ENCODE measurements at regions of chr9 and their contacts with region 1.

Region 1: GRCh38 chr9:78035383-78035993 is 3.9 kb upstream of the GNAQ start:
- DNase-seq: peak; percentile 83
- H3K4me3 ChIP-seq: no peak overlapping the region
- H3K27ac ChIP-seq: peak overlapping the region; percentile 28 to 63 (median 52)
- H3K4me1 ChIP-seq: peaks cover 0 to 24% (median 14%) of the 10 kb centered on the region in 4 donors
- H3K27me3 ChIP-seq: no peaks in the 10 kb centered on the region
- CTCF ChIP-seq: peak; percentile 72 to 85 (median 77)
- EP300 ChIP-seq: no peak
- POLR2A ChIP-seq: no peak

Region 2: DNA sequence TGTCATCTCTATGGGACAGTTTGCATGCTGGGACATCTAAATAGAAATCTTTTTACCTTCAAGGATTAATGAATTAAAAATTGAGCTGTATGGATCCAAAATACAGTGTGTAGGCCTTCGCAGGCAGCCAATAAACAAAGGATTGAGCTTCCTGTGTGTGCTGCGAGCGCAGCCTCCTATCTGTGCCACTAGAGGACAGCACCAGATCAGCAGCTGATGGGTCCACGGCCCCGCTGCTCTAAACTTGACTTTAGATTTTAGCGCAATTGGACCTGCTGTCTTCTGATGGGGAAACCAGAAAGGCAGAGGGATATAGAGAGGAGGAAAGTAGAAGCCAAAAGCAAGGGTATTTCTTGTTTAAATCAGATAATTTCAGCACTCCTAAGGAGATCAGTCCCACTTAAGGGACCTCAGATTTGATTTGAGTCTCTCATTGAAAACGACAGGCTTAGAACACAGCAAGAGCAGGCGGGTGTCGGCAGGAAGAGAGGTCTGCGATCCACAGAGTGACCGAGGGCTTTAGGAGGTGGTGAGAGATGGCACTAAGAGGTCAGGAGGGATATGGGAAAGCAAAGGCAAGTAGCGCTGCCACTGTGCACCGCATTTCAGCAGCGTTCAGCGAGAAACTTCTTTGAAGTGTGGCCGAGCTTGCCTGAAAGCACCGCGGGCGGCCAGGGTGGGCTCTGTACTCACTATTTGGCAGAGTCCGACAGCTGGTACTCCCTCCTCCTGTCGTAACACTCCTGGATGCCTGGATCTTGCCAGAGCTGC is 601.6 kb before region 1 on chr9:
- intact Hi-C with region 1: loop called (anchors 2 kb)
- DNase-seq: peak; percentile 84
- H3K4me3 ChIP-seq: no peak overlapping the region
- H3K27ac ChIP-seq: no peak overlapping the region
- H3K4me1 ChIP-seq: no peaks in the 10 kb centered on the region
- H3K27me3 ChIP-seq: no peaks in the 10 kb centered on the region
- CTCF ChIP-seq: peak; percentile 87 to 96 (median 92)
- EP300 ChIP-seq: no peak
- POLR2A ChIP-seq: no peak

Region 3: GRCh38 chr9:77456829-77457437 is 578.6 kb before region 1 on chr9:
- intact Hi-C with region 1: loop called (anchors 2 kb)
- DNase-seq: peak; percentile 92
- H3K4me3 ChIP-seq: no peak overlapping the region
- H3K27ac ChIP-seq: peak overlapping the region in 1 of 4 donors; percentile 49
- H3K4me1 ChIP-seq: peaks cover 0 to 16% (median 11%) of the 10 kb centered on the region in 4 donors
- H3K27me3 ChIP-seq: no peaks in the 10 kb centered on the region
- CTCF ChIP-seq: peak; percentile 55 to 91 (median 81)
- EP300 ChIP-seq: no peak
- POLR2A ChIP-seq: no peak

Region 4: GRCh38 chr9:77648234-77649120 is 387.0 kb before region 1 on chr9 and contains the start of gene GNA14:
- intact Hi-C with region 1: loop called (anchors 10 kb)
- DNase-seq: peak; percentile 82
- H3K4me3 ChIP-seq: peak within 1 kb of the TSS; percentile 49 to 69 (median 56)
- H3K27ac ChIP-seq: peak within 1 kb of the TSS; percentile 61 to 78 (median 68)
- H3K4me1 ChIP-seq: peaks cover 0 to 46% (median 26%) of the 10 kb centered on the region in 4 donors
- H3K27me3 ChIP-seq: peaks cover 0 to 20% (median 0%) of the 10 kb centered on the region in 3 donors
- CTCF ChIP-seq: no peak
- EP300 ChIP-seq: no peak
- POLR2A ChIP-seq: no peak
- total RNA-seq, gene GNA14: 5.0 to 29.2 (median 10.0) TPM

Region 5: GRCh38 chr9:77944556-77945243 is 90.8 kb before region 1 on chr9:
- intact Hi-C with region 1: loop called (anchors 10 kb)
- DNase-seq: no peak
- H3K4me3 ChIP-seq: no peak overlapping the region
- H3K27ac ChIP-seq: peak overlapping the region; percentile 17 to 66 (median 51)
- H3K4me1 ChIP-seq: peaks cover 0 to 64% (median 55%) of the 10 kb centered on the region in 4 donors
- H3K27me3 ChIP-seq: no peaks in the 10 kb centered on the region
- CTCF ChIP-seq: no peak
- EP300 ChIP-seq: no peak
- POLR2A ChIP-seq: no peak

Region 6: DNA sequence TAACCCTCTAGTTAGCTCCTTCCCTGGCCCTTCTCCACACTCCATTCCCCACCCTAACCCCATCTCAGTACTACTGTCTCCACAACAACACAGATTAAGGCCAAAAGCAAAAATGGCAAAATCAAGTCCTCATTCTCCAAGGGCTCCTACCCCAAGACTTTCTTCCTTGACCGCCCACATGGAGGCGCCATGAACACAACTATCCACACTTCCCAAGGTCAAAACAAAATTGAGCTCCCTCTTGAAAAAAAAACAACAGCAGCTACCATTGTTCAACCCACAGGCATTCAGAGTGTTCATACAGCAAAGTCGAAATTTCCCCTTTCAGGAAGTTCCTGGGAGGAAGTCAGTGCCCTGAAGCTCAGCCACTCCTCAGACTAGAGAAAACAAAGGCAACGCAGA is 58.3 kb before region 1 on chr9:
- intact Hi-C with region 1: loop called (anchors 1 kb)
- DNase-seq: peak; percentile 72
- H3K4me3 ChIP-seq: no peak overlapping the region
- H3K27ac ChIP-seq: peak overlapping the region in 2 of 4 donors; percentile 1 to 3
- H3K4me1 ChIP-seq: peaks cover 0 to 73% (median 44%) of the 10 kb centered on the region in 4 donors
- H3K27me3 ChIP-seq: no peaks in the 10 kb centered on the region
- CTCF ChIP-seq: peak in 2 of 4 experiments; percentile 29 to 37
- EP300 ChIP-seq: no peak
- POLR2A ChIP-seq: no peak

Region 7: DNA sequence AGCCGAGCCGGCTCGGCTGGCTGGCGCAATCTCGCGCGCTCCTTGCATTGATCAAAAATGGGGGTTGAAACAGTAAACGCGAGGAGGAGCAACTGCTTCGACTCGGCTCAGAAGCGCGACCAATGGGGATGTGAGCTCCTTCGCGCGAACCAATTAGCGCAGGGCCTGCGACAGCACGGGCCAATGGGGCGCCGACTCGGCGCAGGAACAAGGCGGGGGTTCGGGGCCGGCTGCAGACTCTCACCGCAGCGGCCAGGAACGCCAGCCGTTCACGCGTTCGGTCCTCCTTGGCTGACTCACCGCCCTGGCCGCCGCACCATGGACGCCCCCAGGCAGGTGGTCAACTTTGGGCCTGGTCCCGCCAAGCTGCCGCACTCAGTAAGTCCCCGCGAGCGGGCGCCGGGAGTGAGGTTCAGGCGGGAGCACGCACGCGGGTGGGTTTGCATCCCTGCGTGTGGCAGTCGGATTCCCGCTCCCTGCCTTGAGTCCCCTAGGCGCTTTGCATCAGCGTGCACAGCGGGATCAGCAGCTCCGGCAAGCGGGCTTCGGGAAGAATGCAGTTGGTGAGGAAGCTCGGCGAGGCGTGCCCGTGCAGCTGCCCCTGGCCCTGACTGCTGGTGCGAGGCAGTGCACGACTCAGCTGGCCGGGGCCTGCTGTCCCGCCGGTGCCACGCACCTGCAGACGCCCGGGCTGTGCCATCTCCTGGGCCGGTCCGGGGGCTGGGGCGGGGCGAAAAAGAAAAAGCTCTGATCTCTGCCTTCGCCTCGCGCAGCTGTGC is 261.6 kb after region 1 on chr9 and contains the start of gene PSAT1:
- intact Hi-C with region 1: loop called (anchors 5 kb)
- DNase-seq: peak; percentile 92
- H3K4me3 ChIP-seq: peak within 1 kb of the TSS; percentile 52 to 65 (median 60)
- H3K27ac ChIP-seq: peak within 1 kb of the TSS; percentile 72 to 80 (median 76)
- H3K4me1 ChIP-seq: peaks cover 0 to 29% (median 27%) of the 10 kb centered on the region in 4 donors
- H3K27me3 ChIP-seq: peaks cover 0 to 19% (median 0%) of the 10 kb centered on the region in 3 donors
- CTCF ChIP-seq: no peak
- EP300 ChIP-seq: no peak
- POLR2A ChIP-seq: no peak
- total RNA-seq, gene PSAT1: 1.4 to 5.1 (median 2.5) TPM

Region 8: DNA sequence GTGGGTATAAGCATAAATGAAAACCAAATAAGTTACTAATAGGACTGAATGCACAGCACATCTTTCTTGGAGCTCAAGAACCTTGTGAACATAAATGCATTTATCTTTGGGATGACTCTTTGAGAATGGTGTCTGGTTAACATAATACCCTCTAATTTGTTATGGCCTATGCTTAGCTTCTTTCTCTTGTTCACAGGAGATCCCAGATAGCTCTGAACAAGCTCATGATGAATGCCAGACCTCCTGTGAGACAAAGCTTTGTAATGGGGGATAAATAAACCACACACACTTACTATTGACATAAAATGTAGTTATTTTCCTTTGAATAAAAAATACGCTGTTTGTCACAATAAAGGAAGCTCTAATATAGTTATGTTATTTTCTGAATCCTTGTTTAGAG is 372.9 kb after region 1 on chr9:
- intact Hi-C with region 1: no loop called
- DNase-seq: no peak
- H3K4me3 ChIP-seq: no peak overlapping the region
- H3K27ac ChIP-seq: no peak overlapping the region
- H3K4me1 ChIP-seq: peaks cover 0 to 12% (median 3%) of the 10 kb centered on the region in 4 donors
- H3K27me3 ChIP-seq: no peaks in the 10 kb centered on the region
- CTCF ChIP-seq: no peak
- EP300 ChIP-seq: no peak
- POLR2A ChIP-seq: no peak

Measured in sigmoid colon (tissue), 7 donors.